ENCODE measurements at regions of chr22 and their contacts with region 1.

Region 1: DNA sequence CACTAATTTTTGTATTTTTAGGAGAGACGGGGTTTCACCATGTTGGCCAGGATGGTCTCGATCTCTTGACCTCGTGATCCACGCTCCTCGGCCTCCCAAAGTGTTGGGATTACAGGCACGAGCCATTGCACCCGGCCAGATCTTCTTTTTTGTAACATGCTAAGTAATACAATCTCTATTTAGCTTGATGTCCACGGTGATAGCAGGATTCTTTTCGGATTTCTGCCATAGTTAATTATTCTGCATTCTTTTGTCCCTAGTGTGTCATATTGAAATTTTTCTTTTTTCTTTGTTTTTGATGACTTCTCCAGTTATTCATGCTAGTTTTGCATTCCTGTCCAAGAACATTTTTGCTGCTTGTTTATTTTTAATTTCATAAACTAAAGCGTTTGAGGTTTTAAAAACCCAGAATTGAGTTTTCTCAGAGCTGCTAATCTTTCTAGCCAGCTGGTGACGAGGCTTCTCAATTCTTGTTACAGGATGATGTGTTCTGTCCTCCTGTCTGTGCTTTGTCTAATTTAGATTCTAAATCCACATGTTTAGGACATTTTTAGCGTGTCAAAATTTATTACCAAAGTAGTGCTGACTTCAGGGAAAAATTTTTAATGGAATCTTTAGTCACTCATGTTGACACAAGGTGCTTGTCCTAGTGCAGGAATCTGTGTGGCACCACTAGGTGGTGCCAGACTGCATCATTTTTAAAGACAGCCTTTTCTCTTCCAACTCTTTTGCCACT is 21.8 kb downstream of the NF2 start:
- DNase-seq: peak; percentile 85
- ATAC-seq: peak; percentile 31
- H3K4me3 ChIP-seq: no peak overlapping the region
- H3K27ac ChIP-seq: peak overlapping the region; percentile 92
- H3K4me1 ChIP-seq: peaks cover 35% of the 10 kb centered on the region
- H3K27me3 ChIP-seq: no peaks in the 10 kb centered on the region
- CTCF ChIP-seq: peak; percentile 86
- POLR2A ChIP-seq: no peak
- RAD21 ChIP-seq: peak; percentile 62

Region 2: DNA sequence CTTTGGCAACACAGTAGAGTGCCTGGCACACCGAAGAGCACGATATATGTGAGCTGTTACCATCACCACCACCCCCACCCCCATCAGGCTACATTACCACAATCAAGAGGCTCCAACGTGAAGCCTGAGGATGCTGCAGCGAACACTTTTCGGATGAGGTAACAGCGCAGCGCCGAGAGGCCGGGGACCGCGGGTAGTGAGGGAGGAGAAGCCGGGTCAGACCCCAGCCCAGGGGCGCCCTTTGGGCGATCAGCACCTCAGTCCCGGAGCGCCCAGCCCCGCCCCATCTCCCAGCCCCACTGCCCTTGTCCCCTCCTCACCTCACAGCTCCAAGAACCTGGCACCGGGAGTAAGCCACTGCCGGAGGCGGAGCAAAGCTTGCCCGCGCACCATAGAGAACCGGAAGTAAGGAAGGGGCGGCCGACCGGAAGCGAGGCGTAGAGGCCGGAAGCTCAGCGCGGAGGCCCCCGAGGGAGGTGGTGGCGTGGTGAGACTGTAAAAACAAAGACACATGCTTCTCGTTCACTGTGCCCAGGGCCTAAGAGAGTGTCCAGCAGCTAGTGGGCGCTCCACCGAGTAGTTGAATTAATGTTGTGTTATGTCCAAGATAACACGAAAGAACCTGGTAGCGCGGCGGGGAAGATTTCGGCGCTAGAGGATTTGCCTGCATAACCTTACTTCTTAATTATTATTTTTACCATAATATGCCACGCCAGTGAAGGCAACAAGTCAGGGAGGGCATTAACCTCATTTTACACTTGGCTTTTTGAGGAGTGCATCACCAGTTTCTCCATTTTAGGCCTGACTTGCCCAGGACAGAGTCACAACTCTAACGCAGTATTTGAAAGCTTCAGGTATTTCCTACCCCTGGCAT is 71.7 kb before region 1 on chr22 and contains the start of gene THOC5:
- CTCF ChIA-PET with region 1: interaction called, 4 read pairs
- POLR2A ChIA-PET with region 1: no interaction called
- dilution Hi-C with region 1: no loop called
- in situ Hi-C with region 1: no loop called
- intact Hi-C with region 1: loop called (anchors 5 kb)
- DNase-seq: peak; percentile 94
- ATAC-seq: peak; percentile 97
- H3K4me3 ChIP-seq: peak within 1 kb of the TSS; percentile 88
- H3K27ac ChIP-seq: peak within 1 kb of the TSS; percentile 62
- H3K4me1 ChIP-seq: no peaks in the 10 kb centered on the region; the same call in 1 of the 2 replicates
- H3K27me3 ChIP-seq: no peaks in the 10 kb centered on the region
- CTCF ChIP-seq: peak; percentile 76
- POLR2A ChIP-seq: peak; percentile 67; the same call in 1 of the 2 replicates
- RAD21 ChIP-seq: peak; percentile 38; the same call in 1 of the 2 replicates
- total RNA-seq, gene THOC5: 61.1 and 73.7 TPM in 2 replicates

Region 3: DNA sequence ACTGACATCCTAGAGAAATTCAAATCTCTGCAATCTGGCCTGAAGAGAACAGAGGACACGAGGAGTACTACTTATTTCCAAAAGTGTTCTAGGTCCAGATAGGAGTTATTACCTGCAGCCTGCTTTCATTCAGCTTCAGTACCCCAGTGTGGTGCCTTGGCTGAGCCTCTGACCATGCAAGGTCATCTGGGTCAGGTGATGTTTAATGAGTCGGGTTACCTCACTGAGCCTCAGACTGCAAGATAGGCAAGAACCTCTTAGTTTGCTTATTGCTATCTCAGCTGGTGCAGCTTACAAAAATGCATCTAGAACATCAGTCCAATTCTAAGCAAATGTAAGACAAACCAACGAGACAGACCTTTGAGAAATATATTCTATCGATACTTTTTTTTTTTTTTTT is 31.3 kb before region 1 on chr22:
- CTCF ChIA-PET with region 1: interaction called, 6 read pairs
- POLR2A ChIA-PET with region 1: no interaction called
- dilution Hi-C with region 1: no loop called
- in situ Hi-C with region 1: no loop called
- intact Hi-C with region 1: loop called (anchors 5 kb)
- DNase-seq: no peak
- ATAC-seq: peak; percentile 21; the same call in 1 of the 2 replicates
- H3K4me3 ChIP-seq: no peak overlapping the region
- H3K27ac ChIP-seq: no peak overlapping the region
- H3K4me1 ChIP-seq: no peaks in the 10 kb centered on the region
- H3K27me3 ChIP-seq: no peaks in the 10 kb centered on the region
- CTCF ChIP-seq: no peak
- POLR2A ChIP-seq: no peak
- RAD21 ChIP-seq: no peak

Region 4: GRCh38 chr22:29635734-29636357 is 10.6 kb after region 1 on chr22:
- CTCF ChIA-PET with region 1: interaction called, 13 read pairs
- POLR2A ChIA-PET with region 1: no interaction called
- dilution Hi-C with region 1: no loop called
- in situ Hi-C with region 1: no loop called
- intact Hi-C with region 1: no loop called
- DNase-seq: peak; percentile 73
- ATAC-seq: peak; percentile 88
- H3K4me3 ChIP-seq: no peak overlapping the region
- H3K27ac ChIP-seq: no peak overlapping the region
- H3K4me1 ChIP-seq: peaks cover 8% of the 10 kb centered on the region
- H3K27me3 ChIP-seq: no peaks in the 10 kb centered on the region
- CTCF ChIP-seq: peak; percentile 72
- POLR2A ChIP-seq: no peak
- RAD21 ChIP-seq: peak; percentile 73

Region 5: GRCh38 chr22:29679316-29679715 is 54.1 kb after region 1 on chr22:
- CTCF ChIA-PET with region 1: no interaction called
- POLR2A ChIA-PET with region 1: interaction called, 11 read pairs
- dilution Hi-C with region 1: no loop called
- in situ Hi-C with region 1: no loop called
- intact Hi-C with region 1: no loop called
- DNase-seq: peak; percentile 19
- ATAC-seq: peak; percentile 82
- H3K4me3 ChIP-seq: no peak overlapping the region
- H3K27ac ChIP-seq: no peak overlapping the region
- H3K4me1 ChIP-seq: peaks cover 7% of the 10 kb centered on the region
- H3K27me3 ChIP-seq: no peaks in the 10 kb centered on the region
- CTCF ChIP-seq: no peak
- POLR2A ChIP-seq: no peak
- RAD21 ChIP-seq: no peak

Region 6: GRCh38 chr22:29744902-29745301 is 119.6 kb after region 1 on chr22:
- CTCF ChIA-PET with region 1: no interaction called
- POLR2A ChIA-PET with region 1: no interaction called
- dilution Hi-C with region 1: no loop called
- in situ Hi-C with region 1: no loop called
- intact Hi-C with region 1: no loop called
- DNase-seq: peak; percentile 70
- ATAC-seq: peak; percentile 77
- H3K4me3 ChIP-seq: no peak overlapping the region
- H3K27ac ChIP-seq: no peak overlapping the region
- H3K4me1 ChIP-seq: peaks cover 5% of the 10 kb centered on the region; the same call in 1 of the 2 replicates
- H3K27me3 ChIP-seq: no peaks in the 10 kb centered on the region
- CTCF ChIP-seq: no peak
- POLR2A ChIP-seq: no peak
- RAD21 ChIP-seq: no peak

Measured in IMR-90 (cell line).